ENCODE measurements at regions of chr7 and their contacts with region 1.

Region 1: DNA sequence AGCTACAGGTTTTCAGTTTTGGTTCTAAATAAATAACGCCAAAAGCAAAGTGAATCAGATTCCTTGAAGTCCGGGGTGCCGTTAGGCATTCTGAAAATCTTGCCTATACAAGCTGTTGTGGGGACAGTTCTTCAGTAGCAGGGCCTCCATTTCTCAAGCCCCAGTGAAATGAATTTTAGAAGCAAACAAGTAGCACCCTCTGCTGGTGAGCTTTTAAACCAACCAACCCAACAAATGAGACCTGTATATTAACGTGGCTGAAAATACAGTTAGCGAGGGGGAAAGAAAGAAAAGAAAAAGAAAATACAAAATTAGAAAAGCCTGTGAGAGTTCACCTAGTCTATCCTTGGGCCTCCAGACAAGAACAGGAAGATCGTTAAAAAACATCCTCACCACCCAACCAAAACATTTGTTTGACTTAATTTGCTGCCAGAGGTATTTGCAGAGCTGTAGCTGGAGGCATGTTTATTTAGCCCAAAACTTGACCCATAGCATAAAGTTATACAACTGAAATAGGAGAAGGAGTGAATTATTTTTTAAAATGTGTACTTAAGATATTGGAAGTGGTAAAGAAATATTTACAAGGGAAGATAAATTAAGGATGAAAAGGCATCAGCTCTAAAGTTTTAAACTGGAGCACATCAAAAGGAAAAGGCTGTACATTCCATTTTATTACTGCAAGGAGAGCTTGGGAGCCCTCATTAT is 98.9 kb downstream of the DYNC1I1 start:
- DNase-seq: peak; percentile 66
- H3K4me3 Mint-ChIP-seq: no peak overlapping the region
- H3K27ac Mint-ChIP-seq: no peak overlapping the region
- H3K4me1 Mint-ChIP-seq: no peaks in the 10 kb centered on the region
- H3K27me3 Mint-ChIP-seq: peaks cover 31% of the 10 kb centered on the region
- CTCF ChIP-seq: peak; percentile 42

Region 2: DNA sequence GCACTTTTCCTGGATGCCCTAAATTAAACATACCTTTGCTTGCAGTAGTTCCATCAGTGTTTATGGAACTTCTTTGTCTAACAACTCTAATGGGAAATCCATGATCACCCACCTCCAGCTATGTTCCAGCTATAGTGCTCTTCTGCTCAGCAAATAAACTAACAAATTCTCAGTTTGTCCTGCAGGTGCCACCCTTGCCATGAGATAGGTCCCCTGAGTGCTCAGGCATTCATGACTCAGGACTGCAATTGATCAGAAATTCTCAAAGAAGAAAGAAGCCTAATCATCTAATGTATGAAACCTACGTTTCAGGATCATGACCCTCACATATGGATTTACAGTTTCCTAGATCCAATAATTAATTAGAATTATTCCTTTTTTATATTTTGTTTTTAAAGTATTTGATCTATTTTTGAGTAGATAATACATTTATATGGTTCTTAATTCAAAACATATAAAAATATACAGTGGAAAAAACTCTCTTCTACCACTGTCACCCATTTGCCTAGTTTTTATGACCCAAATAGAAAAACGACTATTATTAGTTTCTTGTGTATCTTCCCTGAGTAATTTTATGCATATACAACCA is 147.5 kb before region 1 on chr7:
- CTCF ChIA-PET with region 1: interaction called, 151 read pairs
- POLR2A ChIA-PET with region 1: no interaction called
- intact Hi-C with region 1: loop called (anchors 1 kb)
- DNase-seq: peak; percentile 67
- H3K4me3 Mint-ChIP-seq: no peak overlapping the region
- H3K27ac Mint-ChIP-seq: no peak overlapping the region
- H3K4me1 Mint-ChIP-seq: no peaks in the 10 kb centered on the region
- H3K27me3 Mint-ChIP-seq: peaks cover 86% of the 10 kb centered on the region
- CTCF ChIP-seq: peak; percentile 68

Region 3: DNA sequence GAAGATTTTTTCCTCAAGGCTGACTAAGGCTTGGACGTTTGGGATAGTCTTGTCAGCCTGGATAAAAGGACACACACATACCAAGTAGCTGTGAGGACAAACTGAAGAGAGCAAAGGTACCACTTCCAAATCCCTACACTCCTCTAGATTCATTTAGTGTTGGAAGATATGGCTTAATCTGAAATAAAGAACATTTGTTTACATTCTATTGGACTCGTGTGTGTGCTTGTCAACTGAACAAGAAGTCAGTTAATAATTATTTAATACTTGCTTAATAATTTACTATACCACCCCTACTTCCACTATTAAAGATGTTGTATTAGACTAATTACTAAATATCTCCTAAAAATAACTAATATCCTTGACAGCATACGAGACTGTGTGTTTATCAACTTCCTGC is 122.2 kb before region 1 on chr7:
- CTCF ChIA-PET with region 1: no interaction called
- POLR2A ChIA-PET with region 1: no interaction called
- intact Hi-C with region 1: no loop called
- DNase-seq: no peak
- H3K4me3 Mint-ChIP-seq: no peak overlapping the region
- H3K27ac Mint-ChIP-seq: no peak overlapping the region
- H3K4me1 Mint-ChIP-seq: no peaks in the 10 kb centered on the region
- H3K27me3 Mint-ChIP-seq: peaks cover 94% of the 10 kb centered on the region
- CTCF ChIP-seq: no peak

Region 4: DNA sequence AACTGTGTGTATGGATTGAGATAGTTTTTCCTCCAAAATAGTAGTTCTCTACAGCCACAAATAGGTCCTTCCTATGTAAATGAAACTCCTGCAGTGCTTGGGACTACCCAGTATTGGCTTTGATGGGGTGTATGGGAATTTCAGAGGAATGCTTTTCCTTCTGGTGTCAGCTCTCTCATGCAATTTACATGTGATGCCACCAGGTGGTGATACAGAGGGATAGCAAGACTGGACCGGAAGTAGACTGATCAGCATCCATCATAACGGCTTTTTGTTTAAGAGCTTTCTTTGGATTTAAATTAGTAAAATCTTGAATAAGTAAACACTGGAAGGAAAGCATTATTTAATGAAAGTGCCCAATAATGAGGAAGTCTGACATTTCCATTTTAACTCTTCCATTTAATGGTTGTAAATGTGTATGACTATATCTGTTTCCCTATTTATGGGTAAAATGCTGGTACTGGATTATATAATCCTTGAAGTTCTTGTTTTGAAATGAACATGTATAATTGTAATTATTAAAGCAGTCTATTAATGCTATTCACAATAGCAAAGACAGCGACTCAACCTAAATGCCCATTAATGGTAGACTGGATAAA is 76.2 kb before region 1 on chr7:
- CTCF ChIA-PET with region 1: interaction called, 3 read pairs
- POLR2A ChIA-PET with region 1: no interaction called
- intact Hi-C with region 1: loop called (anchors 5 kb)
- DNase-seq: peak; percentile 53
- H3K4me3 Mint-ChIP-seq: no peak overlapping the region
- H3K27ac Mint-ChIP-seq: no peak overlapping the region
- H3K4me1 Mint-ChIP-seq: no peaks in the 10 kb centered on the region
- H3K27me3 Mint-ChIP-seq: peaks cover 46% of the 10 kb centered on the region
- CTCF ChIP-seq: peak; percentile 50

Region 5: GRCh38 chr7:95859434-95859833 is 11.8 kb before region 1 on chr7:
- CTCF ChIA-PET with region 1: interaction called, 11 read pairs
- POLR2A ChIA-PET with region 1: no interaction called
- intact Hi-C with region 1: no loop called
- DNase-seq: no peak
- H3K4me3 Mint-ChIP-seq: no peak overlapping the region
- H3K27ac Mint-ChIP-seq: no peak overlapping the region
- H3K4me1 Mint-ChIP-seq: no peaks in the 10 kb centered on the region
- H3K27me3 Mint-ChIP-seq: peaks cover 63% of the 10 kb centered on the region
- CTCF ChIP-seq: no peak

Region 6: GRCh38 chr7:95927756-95928155 is 56.5 kb after region 1 on chr7:
- CTCF ChIA-PET with region 1: no interaction called
- POLR2A ChIA-PET with region 1: no interaction called
- intact Hi-C with region 1: no loop called
- DNase-seq: no peak
- H3K4me3 Mint-ChIP-seq: no peak overlapping the region
- H3K27ac Mint-ChIP-seq: no peak overlapping the region
- H3K4me1 Mint-ChIP-seq: no peaks in the 10 kb centered on the region
- H3K27me3 Mint-ChIP-seq: peaks cover 86% of the 10 kb centered on the region
- CTCF ChIP-seq: no peak

Region 7: GRCh38 chr7:95960706-95961244 is 89.5 kb after region 1 on chr7:
- CTCF ChIA-PET with region 1: no interaction called
- POLR2A ChIA-PET with region 1: no interaction called
- intact Hi-C with region 1: no loop called
- DNase-seq: no peak
- H3K4me3 Mint-ChIP-seq: no peak overlapping the region
- H3K27ac Mint-ChIP-seq: no peak overlapping the region
- H3K4me1 Mint-ChIP-seq: no peaks in the 10 kb centered on the region
- H3K27me3 Mint-ChIP-seq: peaks cover 77% of the 10 kb centered on the region
- CTCF ChIP-seq: no peak